ENCODE measurements at regions of chr3 and their contacts with region 1.

Region 1: DNA sequence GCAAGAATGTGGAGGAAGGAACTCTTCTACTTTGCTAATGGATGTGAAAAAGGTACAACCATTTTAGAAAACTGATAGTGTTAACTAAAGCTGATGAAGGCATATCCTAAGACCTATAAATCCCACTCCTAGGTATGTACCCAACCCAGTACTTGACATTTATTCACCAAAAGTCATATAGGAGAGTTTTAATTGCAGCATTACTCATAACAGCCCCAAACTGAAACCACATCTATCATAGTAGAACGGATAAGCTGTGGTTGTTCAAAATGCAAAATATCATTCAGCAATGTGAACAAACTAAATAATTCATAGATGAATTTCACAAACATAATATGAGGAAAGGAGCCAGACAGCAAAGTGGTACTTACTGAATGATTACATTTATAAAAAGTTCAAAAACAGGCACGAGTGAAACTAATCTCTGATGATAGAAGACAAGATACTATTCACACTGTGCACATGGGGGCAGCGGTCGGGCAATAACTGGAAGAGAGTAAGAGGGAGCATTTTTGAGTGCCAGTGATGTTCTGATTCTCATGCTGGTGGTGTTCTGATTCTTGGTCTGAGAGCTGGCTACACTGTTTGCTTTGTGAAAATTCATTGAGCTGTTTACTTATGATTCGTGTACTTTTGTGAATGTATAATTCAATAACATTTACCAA is 34.3 kb downstream of the GOLIM4 start:
- DNase-seq: peak; percentile 27
- ATAC-seq: peak; percentile 92
- H3K4me3 Mint-ChIP-seq: no peak overlapping the region
- H3K27ac Mint-ChIP-seq: no peak overlapping the region
- H3K4me1 Mint-ChIP-seq: peaks cover 15% of the 10 kb centered on the region
- H3K27me3 Mint-ChIP-seq: peaks cover 5% of the 10 kb centered on the region

Region 2: GRCh38 chr3:168071591-168072322 is 10.3 kb after region 1 on chr3:
- CTCF ChIA-PET with region 1: interaction called, 3 read pairs
- POLR2A ChIA-PET with region 1: no interaction called
- intact Hi-C with region 1: loop called in 1 of 2 experiments (anchors 1 kb)
- DNase-seq: no peak
- ATAC-seq: peak; percentile 72
- H3K4me3 Mint-ChIP-seq: no peak overlapping the region
- H3K27ac Mint-ChIP-seq: no peak overlapping the region
- H3K4me1 Mint-ChIP-seq: peaks cover 3% of the 10 kb centered on the region
- H3K27me3 Mint-ChIP-seq: no peaks in the 10 kb centered on the region

Region 3: DNA sequence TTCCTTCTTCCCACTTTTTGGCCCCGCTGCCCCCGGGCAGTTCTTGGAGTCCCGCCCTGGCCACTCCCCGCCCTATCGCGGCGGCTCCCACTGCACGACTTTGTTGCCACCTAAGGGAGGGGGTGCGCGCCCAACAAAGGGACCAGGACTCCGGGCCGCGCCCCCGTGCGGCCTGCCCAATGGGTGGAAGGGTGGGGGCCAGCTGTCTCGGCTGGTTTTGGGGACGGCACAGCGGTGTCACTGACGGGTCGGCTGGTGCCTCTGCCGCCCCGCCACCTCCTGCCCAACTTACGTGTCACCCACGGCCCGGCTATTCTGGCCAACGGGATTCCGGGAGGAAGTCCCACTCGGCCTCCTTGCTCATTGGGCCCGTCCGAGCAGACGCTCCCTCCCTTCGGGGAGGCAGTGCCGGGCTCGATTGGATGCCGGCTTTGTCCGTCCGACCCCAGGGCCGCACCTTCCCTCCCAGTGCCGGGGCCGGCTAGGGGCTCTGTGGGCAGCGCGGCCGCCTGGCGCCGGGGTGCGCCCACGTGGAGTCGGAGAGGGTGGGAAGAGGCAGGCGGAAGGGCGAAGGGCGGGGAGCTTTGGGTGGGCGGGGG is 34.2 kb after region 1 on chr3 and contains the start of gene GOLIM4:
- CTCF ChIA-PET with region 1: interaction called, 6 read pairs
- POLR2A ChIA-PET with region 1: no interaction called
- intact Hi-C with region 1: loop called (anchors 1 to 2 kb)
- DNase-seq: peak; percentile 75
- ATAC-seq: peak; percentile 81
- H3K4me3 Mint-ChIP-seq: peak within 1 kb of the TSS; percentile 75
- H3K27ac Mint-ChIP-seq: peak within 1 kb of the TSS; percentile 66
- H3K4me1 Mint-ChIP-seq: peaks cover 10% of the 10 kb centered on the region
- H3K27me3 Mint-ChIP-seq: peaks cover 39% of the 10 kb centered on the region
- total RNA-seq, gene GOLIM4: 3.2 to 4.1 TPM

Region 4: DNA sequence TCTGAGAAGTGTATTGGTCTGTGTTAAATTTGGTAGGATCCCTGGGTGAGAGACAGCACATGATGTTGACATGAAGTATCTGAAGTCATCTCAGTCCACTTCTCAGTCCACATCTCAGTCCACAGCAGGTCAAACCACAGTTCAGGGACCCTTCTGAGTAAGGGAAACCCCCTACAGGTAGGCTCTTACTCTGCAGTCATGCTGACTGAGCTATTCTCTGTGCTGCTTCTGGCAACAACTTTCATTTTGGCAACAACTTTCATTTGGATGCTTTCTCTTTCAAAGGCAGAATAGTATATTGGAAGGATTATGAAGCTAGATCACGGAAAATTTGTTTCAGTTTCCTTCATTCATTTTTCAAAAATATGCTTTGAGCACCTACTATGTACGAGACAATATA is 212.5 kb after region 1 on chr3:
- CTCF ChIA-PET with region 1: no interaction called
- POLR2A ChIA-PET with region 1: no interaction called
- intact Hi-C with region 1: no loop called
- DNase-seq: no peak
- ATAC-seq: no peak
- H3K4me3 Mint-ChIP-seq: no peak overlapping the region
- H3K27ac Mint-ChIP-seq: no peak overlapping the region
- H3K4me1 Mint-ChIP-seq: no peaks in the 10 kb centered on the region
- H3K27me3 Mint-ChIP-seq: no peaks in the 10 kb centered on the region